ENCODE measurements at regions of chr2 and their contacts with region 1.

Region 1: GRCh38 chr2:232300894-232301387 is 77.6 kb upstream of the ALPP start:
- DNase-seq: no peak
- ATAC-seq: no peak
- H3K4me3 Mint-ChIP-seq: no peak overlapping the region
- H3K27ac Mint-ChIP-seq: no peak overlapping the region
- H3K4me1 Mint-ChIP-seq: peaks cover 35% of the 10 kb centered on the region
- H3K27me3 Mint-ChIP-seq: no peaks in the 10 kb centered on the region

Region 2: GRCh38 chr2:232315049-232315922 is 14.3 kb after region 1 on chr2:
- CTCF ChIA-PET with region 1: interaction called, 98 read pairs
- POLR2A ChIA-PET with region 1: interaction called, 13 read pairs
- DNase-seq: peak; percentile 92
- ATAC-seq: peak; percentile 88
- H3K4me3 Mint-ChIP-seq: peak overlapping the region; percentile 42
- H3K27ac Mint-ChIP-seq: peak overlapping the region; percentile 96
- H3K4me1 Mint-ChIP-seq: peaks cover 92% of the 10 kb centered on the region
- H3K27me3 Mint-ChIP-seq: no peaks in the 10 kb centered on the region